ENCODE measurements at regions of chr15 and their contacts with region 1.

Region 1: DNA sequence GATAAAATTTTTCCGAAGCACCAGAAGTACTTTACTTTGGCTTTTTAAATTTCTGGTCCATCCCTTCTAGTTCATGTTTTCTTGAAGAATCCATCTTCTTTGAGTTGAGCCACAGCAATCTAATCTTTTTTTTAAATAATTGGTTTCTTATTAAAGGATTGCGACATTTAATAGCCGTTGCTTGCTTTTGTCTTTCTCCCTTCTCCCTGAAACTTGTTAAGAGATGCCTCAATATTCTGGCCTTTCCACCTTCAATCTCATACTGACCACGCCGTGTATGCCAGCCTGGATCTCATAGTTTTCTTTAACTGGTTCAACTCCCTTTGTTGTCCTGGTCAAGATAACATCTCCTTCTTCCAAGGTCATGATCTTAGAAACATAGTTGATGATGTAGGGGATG is 18.4 kb upstream of the RPLP1 start:
- DNase-seq: no peak
- CTCF ChIP-seq: no peak

Region 2: DNA sequence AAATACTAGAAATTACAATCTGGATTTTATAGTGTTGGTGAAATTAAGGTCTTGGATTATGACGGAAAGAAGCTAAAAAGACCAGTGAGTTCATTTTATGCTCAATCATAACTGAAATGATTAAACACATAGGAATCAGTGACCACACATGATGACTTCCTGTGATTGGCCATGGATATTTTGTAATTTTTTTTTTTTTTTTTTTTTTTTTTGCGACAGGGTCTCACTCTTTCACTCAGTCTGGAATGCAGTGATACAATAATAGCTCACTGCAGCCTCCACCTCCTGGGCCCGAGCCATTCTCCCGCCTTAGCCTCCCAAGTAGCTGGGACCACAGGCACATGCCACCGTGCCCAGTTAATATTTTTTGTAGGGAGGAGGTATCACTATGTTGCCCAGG is 88.1 kb before region 1 on chr15:
- CTCF ChIA-PET with region 1: no interaction called
- POLR2A ChIA-PET with region 1: no interaction called
- DNase-seq: no peak
- CTCF ChIP-seq: no peak

Region 3: DNA sequence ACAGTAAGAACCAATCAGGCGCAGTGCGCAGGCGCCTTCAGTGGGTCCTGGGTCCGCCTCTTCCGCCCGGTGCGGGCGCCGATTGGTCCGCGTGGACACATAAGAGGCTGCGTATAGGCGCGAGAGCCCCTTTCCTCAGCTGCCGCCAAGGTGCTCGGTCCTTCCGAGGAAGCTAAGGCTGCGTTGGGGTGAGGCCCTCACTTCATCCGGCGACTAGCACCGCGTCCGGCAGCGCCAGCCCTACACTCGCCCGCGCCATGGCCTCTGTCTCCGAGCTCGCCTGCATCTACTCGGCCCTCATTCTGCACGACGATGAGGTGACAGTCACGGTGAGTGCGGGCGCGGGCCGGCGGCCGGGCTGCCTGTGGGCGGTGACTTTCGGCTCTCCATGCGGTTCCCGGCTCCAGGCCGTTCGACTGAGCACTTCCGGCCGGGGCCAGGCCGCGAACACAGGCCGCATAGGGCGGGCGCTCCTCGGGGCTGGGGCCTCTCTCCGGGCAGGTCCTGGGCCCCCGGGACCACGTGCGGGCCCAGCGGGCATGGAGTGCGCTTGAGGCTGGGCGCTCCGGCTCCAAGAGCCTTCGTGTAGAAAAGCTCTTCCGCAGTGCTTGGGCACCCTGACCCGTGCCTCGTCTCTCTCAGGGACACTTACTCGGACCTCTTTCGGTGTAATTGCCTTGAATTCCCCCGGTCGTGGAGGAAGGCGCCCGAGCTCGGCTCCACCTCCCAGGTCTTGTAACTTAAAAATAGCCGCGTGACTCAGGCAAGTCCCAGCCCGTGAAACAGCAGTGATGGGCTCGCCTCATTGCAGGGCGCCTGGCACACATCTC is 18.7 kb after region 1 on chr15 and contains the start of gene RPLP1:
- CTCF ChIA-PET with region 1: interaction called, 16 read pairs
- POLR2A ChIA-PET with region 1: interaction called, 10 read pairs
- DNase-seq: peak; percentile 95
- CTCF ChIP-seq: no peak

Measured in GM10248 (cell line).